Common myeloid progenitor, CD34-positive (primary cell): ENCODE measurements at regions of chr20 and their contacts with region 1.

Region 1: GRCh38 chr20:59222253-59223181 is 58.9 kb downstream of the ZNF831 start:
- DNase-seq: peak; percentile 72 to 86 (median 83)
- H3K4me3 ChIP-seq: peak overlapping the region in 6 of 7 experiments; percentile 35 to 71 (median 62)
- H3K27ac ChIP-seq: no peak overlapping the region
- H3K4me1 ChIP-seq: peaks cover 0 to 18% (median 10%) of the 10 kb centered on the region in 4 experiments
- H3K27me3 ChIP-seq: peaks cover 0 to 55% (median 7%) of the 10 kb centered on the region in 5 experiments

Region 2: DNA sequence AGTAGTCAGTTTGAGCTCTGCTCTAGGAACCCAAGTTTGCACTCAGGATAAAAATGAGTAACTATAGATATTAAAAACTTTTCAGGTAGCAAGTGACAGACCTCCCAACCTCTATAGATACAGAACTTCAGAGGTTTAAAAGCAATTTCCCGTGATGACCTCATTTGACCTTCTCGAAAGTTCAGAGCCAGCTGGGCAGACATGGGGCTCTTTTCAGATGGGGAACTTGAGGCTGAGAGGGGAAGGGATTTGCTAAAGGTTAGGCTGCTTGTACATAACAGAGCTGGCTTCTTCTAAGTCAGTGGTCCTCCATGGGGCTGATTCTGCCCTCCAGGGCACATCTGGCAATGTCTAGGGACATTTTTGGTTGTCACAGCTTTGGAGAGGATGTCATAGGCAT is 117.7 kb before region 1 on chr20:
- CTCF ChIA-PET with region 1: no interaction called
- POLR2A ChIA-PET with region 1: no interaction called
- DNase-seq: no peak
- H3K4me3 ChIP-seq: no peak overlapping the region
- H3K27ac ChIP-seq: no peak overlapping the region
- H3K4me1 ChIP-seq: peaks cover 0 to 10% (median 5%) of the 10 kb centered on the region in 4 experiments
- H3K27me3 ChIP-seq: peaks cover 0 to 7% (median 0%) of the 10 kb centered on the region in 5 experiments

Region 3: GRCh38 chr20:59177261-59178250 is 45.0 kb before region 1 on chr20:
- CTCF ChIA-PET with region 1: no interaction called
- POLR2A ChIA-PET with region 1: no interaction called
- DNase-seq: no peak
- H3K4me3 ChIP-seq: no peak overlapping the region
- H3K27ac ChIP-seq: no peak overlapping the region
- H3K4me1 ChIP-seq: peaks cover 0 to 3% (median 1%) of the 10 kb centered on the region in 4 experiments
- H3K27me3 ChIP-seq: no peaks in the 10 kb centered on the region

Region 4: GRCh38 chr20:59253779-59254319 is 31.3 kb after region 1 on chr20:
- CTCF ChIA-PET with region 1: interaction called, 12 read pairs
- POLR2A ChIA-PET with region 1: no interaction called
- DNase-seq: peak; percentile 46 to 80 (median 73)
- H3K4me3 ChIP-seq: peak overlapping the region in 1 of 7 experiments; percentile 43
- H3K27ac ChIP-seq: no peak overlapping the region
- H3K4me1 ChIP-seq: peaks cover 14 to 44% (median 38%) of the 10 kb centered on the region in 4 experiments
- H3K27me3 ChIP-seq: peaks cover 0 to 28% (median 0%) of the 10 kb centered on the region in 5 experiments

Region 5: GRCh38 chr20:59359526-59360240 is 137.2 kb after region 1 on chr20:
- CTCF ChIA-PET with region 1: no interaction called
- POLR2A ChIA-PET with region 1: no interaction called
- DNase-seq: no peak
- H3K4me3 ChIP-seq: no peak overlapping the region
- H3K27ac ChIP-seq: no peak overlapping the region
- H3K4me1 ChIP-seq: no peaks in the 10 kb centered on the region
- H3K27me3 ChIP-seq: peaks cover 0 to 6% (median 0%) of the 10 kb centered on the region in 5 experiments

Region 6: GRCh38 chr20:59371431-59371830 is 148.9 kb after region 1 on chr20:
- CTCF ChIA-PET with region 1: no interaction called
- POLR2A ChIA-PET with region 1: no interaction called
- DNase-seq: peak in 1 of 3 donors; percentile 21
- H3K4me3 ChIP-seq: no peak overlapping the region
- H3K27ac ChIP-seq: no peak overlapping the region
- H3K4me1 ChIP-seq: no peaks in the 10 kb centered on the region
- H3K27me3 ChIP-seq: no peaks in the 10 kb centered on the region